Activated CD4-positive, alpha-beta T cell treated with anti-CD3 and anti-CD28 coated beads for 36 hours (primary cell): ENCODE measurements at regions of chr1 and their contacts with region 1.

Region 1: GRCh38 chr1:15409388-15410222 is at the start of gene EFHD2:
- DNase-seq: peak; percentile 90
- ATAC-seq: peak; percentile 86
- H3K4me3 Mint-ChIP-seq: peak within 1 kb of the TSS; percentile 87
- H3K27ac Mint-ChIP-seq: peak within 1 kb of the TSS; percentile 81
- H3K4me1 Mint-ChIP-seq: peaks cover 28% of the 10 kb centered on the region
- H3K27me3 Mint-ChIP-seq: peaks cover 5% of the 10 kb centered on the region
- total RNA-seq, gene EFHD2: 43.1 to 48.6 TPM

Region 2: DNA sequence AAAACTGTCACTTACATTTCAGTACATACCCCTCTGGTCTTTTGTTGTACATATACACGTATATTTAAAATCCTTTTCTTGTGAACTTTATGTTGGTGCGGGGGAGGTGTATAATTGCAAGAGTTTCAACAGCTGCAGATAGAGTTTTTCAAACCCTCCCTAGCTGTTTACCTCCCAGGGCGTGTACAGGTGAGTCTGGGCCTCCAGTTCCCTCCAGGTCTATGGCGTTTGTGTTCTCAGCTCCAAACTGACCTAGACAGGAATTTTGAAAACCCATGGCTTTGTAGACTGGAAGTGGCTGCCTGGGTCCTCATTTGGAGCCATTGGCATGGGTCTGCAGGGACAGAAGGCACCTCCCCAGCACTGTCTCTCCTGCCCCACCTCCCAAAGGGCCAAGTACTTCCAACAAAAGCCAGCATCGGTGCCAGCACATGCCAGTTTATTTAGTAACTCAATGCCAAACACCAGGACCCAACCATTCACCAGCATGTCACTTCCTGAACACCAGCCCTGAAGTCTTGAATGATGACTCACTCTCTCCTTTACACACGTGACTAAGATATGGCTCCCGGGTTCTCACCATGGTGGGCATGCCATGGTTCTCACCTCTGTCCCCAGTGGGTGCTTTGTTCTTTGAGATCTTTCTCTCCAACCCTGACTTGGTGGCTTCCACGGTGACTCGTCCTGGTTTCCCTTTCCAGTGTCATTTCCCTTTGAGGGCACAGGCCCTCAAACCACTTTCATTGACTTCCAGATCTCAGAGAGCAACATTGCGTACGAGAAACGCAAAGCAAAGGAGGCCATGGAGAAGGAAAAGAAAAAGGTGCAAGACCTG is 57.3 kb before region 1 on chr1:
- CTCF ChIA-PET with region 1: no interaction called
- POLR2A ChIA-PET with region 1: interaction called, 3 read pairs
- intact Hi-C with region 1: loop called in 1 of 2 experiments (anchors 1 kb)
- DNase-seq: peak; percentile 71
- ATAC-seq: peak; percentile 90
- H3K4me3 Mint-ChIP-seq: no peak overlapping the region
- H3K27ac Mint-ChIP-seq: peak overlapping the region; percentile 61
- H3K4me1 Mint-ChIP-seq: peaks cover 39% of the 10 kb centered on the region
- H3K27me3 Mint-ChIP-seq: peaks cover 8% of the 10 kb centered on the region